ENCODE measurements at regions of chr3 and their contacts with region 1.

Region 1: GRCh38 chr3:169149349-169149890 is 514.1 kb downstream of the MECOM start:
- DNase-seq: peak; percentile 93
- H3K4me3 ChIP-seq: peak overlapping the region in 2 of 3 experiments; percentile 30 to 60
- H3K27ac ChIP-seq: peak overlapping the region; percentile 82
- H3K4me1 ChIP-seq: peaks cover 47% of the 10 kb centered on the region
- H3K27me3 ChIP-seq: no peaks in the 10 kb centered on the region
- CTCF ChIP-seq: peak; percentile 88 to 89
- POLR2A ChIP-seq: peak; percentile 71

Region 2: GRCh38 chr3:169112153-169112892 is 37.1 kb before region 1 on chr3:
- CTCF ChIA-PET with region 1: interaction called, 4 read pairs
- POLR2A ChIA-PET with region 1: no interaction called
- dilution Hi-C with region 1: no loop called
- intact Hi-C with region 1: loop called (anchors 1 kb)
- DNase-seq: peak; percentile 86
- H3K4me3 ChIP-seq: peak overlapping the region in 1 of 3 experiments; percentile 14
- H3K27ac ChIP-seq: peak overlapping the region; percentile 96
- H3K4me1 ChIP-seq: peaks cover 63% of the 10 kb centered on the region
- H3K27me3 ChIP-seq: no peaks in the 10 kb centered on the region
- CTCF ChIP-seq: no peak
- POLR2A ChIP-seq: peak; percentile 71

Region 3: DNA sequence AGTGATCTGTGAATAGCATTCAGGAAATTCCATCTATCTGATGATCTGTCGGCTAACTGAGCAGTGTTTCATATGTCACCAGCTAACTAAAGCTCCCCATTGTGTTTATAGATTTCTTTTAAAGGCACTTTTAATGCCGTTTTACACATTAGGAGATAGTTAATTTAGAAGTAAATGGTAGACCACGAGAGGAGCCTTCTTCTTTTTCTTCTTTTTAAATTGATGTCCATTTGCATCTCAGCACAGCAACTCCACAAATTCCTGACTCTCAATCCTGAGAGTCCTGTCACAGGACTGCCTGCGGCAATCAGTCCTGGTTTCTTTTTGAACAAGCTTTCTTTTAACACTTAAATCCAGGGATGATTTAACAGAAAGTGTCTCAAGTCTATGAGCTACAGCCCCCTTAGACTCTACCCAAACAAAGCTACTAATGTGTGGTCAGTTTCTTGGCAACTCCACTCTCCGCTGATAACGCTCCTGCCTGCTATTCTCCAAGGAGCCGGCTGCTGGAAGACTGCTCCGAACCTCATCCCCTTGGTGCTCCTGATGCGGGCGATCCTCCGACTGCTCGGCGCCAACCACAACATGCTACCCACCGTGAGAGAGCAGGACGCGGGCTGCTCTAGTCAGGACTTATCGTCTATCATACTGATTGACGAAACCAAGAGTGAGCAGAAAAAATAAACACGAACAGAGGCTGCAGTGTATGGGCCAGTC is 92.7 kb after region 1 on chr3:
- CTCF ChIA-PET with region 1: interaction called, 58 read pairs
- POLR2A ChIA-PET with region 1: interaction called, 8 read pairs
- dilution Hi-C with region 1: no loop called
- intact Hi-C with region 1: loop called (anchors 1 kb)
- DNase-seq: peak; percentile 87
- H3K4me3 ChIP-seq: peak overlapping the region; percentile 40 to 79 (median 42)
- H3K27ac ChIP-seq: peak overlapping the region; percentile 97
- H3K4me1 ChIP-seq: peaks cover 64% of the 10 kb centered on the region
- H3K27me3 ChIP-seq: no peaks in the 10 kb centered on the region
- CTCF ChIP-seq: no peak
- POLR2A ChIP-seq: peak; percentile 42

Region 4: GRCh38 chr3:169390271-169391230 is 241.1 kb after region 1 on chr3:
- CTCF ChIA-PET with region 1: interaction called, 70 read pairs
- POLR2A ChIA-PET with region 1: interaction called, 3 read pairs
- dilution Hi-C with region 1: no loop called
- intact Hi-C with region 1: loop called (anchors 1 kb)
- DNase-seq: peak; percentile 80
- H3K4me3 ChIP-seq: no peak overlapping the region
- H3K27ac ChIP-seq: peak overlapping the region; percentile 88
- H3K4me1 ChIP-seq: peaks cover 45% of the 10 kb centered on the region
- H3K27me3 ChIP-seq: no peaks in the 10 kb centered on the region
- CTCF ChIP-seq: peak; percentile 15 to 25
- POLR2A ChIP-seq: no peak

Region 5: DNA sequence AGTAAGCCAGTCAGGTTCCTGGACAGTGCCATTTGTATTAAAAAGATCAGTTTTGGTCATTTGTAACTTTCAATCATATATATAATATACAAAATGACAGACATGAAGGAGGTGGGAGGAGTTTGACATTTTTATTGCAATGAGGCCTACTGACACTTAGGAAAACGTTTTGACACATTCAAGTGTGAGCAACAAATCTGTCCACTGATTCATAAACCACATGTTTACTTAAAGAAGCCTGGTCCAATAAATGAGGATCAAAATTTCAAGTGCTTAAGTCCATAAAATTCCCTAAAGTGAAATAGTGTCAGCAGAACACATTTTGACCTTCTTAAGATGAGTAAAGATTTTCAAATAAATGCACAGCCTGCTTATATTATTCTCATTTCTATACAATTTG is 376.8 kb after region 1 on chr3:
- CTCF ChIA-PET with region 1: interaction called, 9 read pairs
- POLR2A ChIA-PET with region 1: no interaction called
- dilution Hi-C with region 1: no loop called
- intact Hi-C with region 1: loop called (anchors 2 kb)
- DNase-seq: peak; percentile 75
- H3K4me3 ChIP-seq: no peak overlapping the region
- H3K27ac ChIP-seq: peak overlapping the region; percentile 71
- H3K4me1 ChIP-seq: peaks cover 40% of the 10 kb centered on the region
- H3K27me3 ChIP-seq: no peaks in the 10 kb centered on the region
- CTCF ChIP-seq: no peak
- POLR2A ChIP-seq: no peak

Region 6: GRCh38 chr3:169744366-169745054 is 595.1 kb after region 1 on chr3:
- CTCF ChIA-PET with region 1: interaction called, 6 read pairs
- POLR2A ChIA-PET with region 1: no interaction called
- dilution Hi-C with region 1: no loop called
- intact Hi-C with region 1: loop called (anchors 1 kb)
- DNase-seq: peak; percentile 74
- H3K4me3 ChIP-seq: no peak overlapping the region
- H3K27ac ChIP-seq: no peak overlapping the region
- H3K4me1 ChIP-seq: no peaks in the 10 kb centered on the region
- H3K27me3 ChIP-seq: peaks cover 2 to 13% of the 10 kb centered on the region in 2 experiments
- CTCF ChIP-seq: peak in 1 of 2 donors; percentile 21
- POLR2A ChIP-seq: no peak

Measured in endothelial cell of umbilical vein (primary cell).